CD4-positive, alpha-beta T cell (primary cell): ENCODE measurements at regions of chr17 and their contacts with region 1.

Region 1: DNA sequence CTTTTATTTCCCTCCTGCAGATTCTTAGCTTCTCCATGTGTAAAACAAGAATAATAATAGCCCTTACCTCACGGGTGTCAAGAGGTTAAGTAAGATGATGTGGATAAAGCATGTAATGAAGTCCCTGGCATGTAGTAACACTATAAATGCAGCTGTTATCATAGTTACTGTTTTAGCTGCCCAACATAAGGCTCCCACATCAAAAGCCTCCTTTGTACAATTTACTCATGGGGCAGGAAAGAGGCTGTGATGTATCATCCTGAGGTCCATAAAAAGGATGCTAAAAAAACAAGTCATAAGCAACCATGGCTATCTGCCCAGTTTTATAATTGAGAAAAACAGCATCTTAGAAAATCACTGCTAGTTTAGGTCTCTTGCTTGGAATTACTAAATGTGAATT is 339.7 kb downstream of the CA10 start:
- DNase-seq: no peak
- ATAC-seq: no peak
- H3K4me3 ChIP-seq: no peak overlapping the region
- H3K4me3 Mint-ChIP-seq: no peak overlapping the region
- H3K27ac ChIP-seq: no peak overlapping the region
- H3K27ac Mint-ChIP-seq: no peak overlapping the region
- H3K4me1 ChIP-seq: no peaks in the 10 kb centered on the region
- H3K4me1 Mint-ChIP-seq: no peaks in the 10 kb centered on the region
- H3K27me3 ChIP-seq: peaks cover 0 to 3% of the 10 kb centered on the region in 2 experiments
- H3K27me3 Mint-ChIP-seq: no peaks in the 10 kb centered on the region
- CTCF ChIP-seq: no peak

Region 2: GRCh38 chr17:51751072-51751471 is 67.7 kb before region 1 on chr17:
- CTCF ChIA-PET with region 1: no interaction called
- POLR2A ChIA-PET with region 1: no interaction called
- intact Hi-C with region 1: no loop called
- DNase-seq: no peak
- ATAC-seq: no peak
- H3K4me3 ChIP-seq: no peak overlapping the region
- H3K4me3 Mint-ChIP-seq: no peak overlapping the region
- H3K27ac ChIP-seq: no peak overlapping the region
- H3K27ac Mint-ChIP-seq: no peak overlapping the region
- H3K4me1 ChIP-seq: no peaks in the 10 kb centered on the region
- H3K4me1 Mint-ChIP-seq: no peaks in the 10 kb centered on the region
- H3K27me3 ChIP-seq: no peaks in the 10 kb centered on the region
- H3K27me3 Mint-ChIP-seq: peaks cover 4% of the 10 kb centered on the region
- CTCF ChIP-seq: no peak

Region 3: GRCh38 chr17:51793686-51794085 is 25.1 kb before region 1 on chr17:
- CTCF ChIA-PET with region 1: no interaction called
- POLR2A ChIA-PET with region 1: no interaction called
- intact Hi-C with region 1: no loop called
- DNase-seq: no peak
- ATAC-seq: no peak
- H3K4me3 ChIP-seq: no peak overlapping the region
- H3K4me3 Mint-ChIP-seq: no peak overlapping the region
- H3K27ac ChIP-seq: no peak overlapping the region
- H3K27ac Mint-ChIP-seq: no peak overlapping the region
- H3K4me1 ChIP-seq: no peaks in the 10 kb centered on the region
- H3K4me1 Mint-ChIP-seq: no peaks in the 10 kb centered on the region
- H3K27me3 ChIP-seq: peaks cover 0 to 3% of the 10 kb centered on the region in 2 experiments
- H3K27me3 Mint-ChIP-seq: peaks cover 56% of the 10 kb centered on the region
- CTCF ChIP-seq: no peak

Region 4: GRCh38 chr17:51876986-51877385 is 58.2 kb after region 1 on chr17:
- CTCF ChIA-PET with region 1: no interaction called
- POLR2A ChIA-PET with region 1: no interaction called
- intact Hi-C with region 1: loop called in 1 of 2 experiments (anchors 10 kb)
- DNase-seq: no peak
- ATAC-seq: no peak
- H3K4me3 ChIP-seq: no peak overlapping the region
- H3K4me3 Mint-ChIP-seq: no peak overlapping the region
- H3K27ac ChIP-seq: no peak overlapping the region
- H3K27ac Mint-ChIP-seq: no peak overlapping the region
- H3K4me1 ChIP-seq: no peaks in the 10 kb centered on the region
- H3K4me1 Mint-ChIP-seq: no peaks in the 10 kb centered on the region
- H3K27me3 ChIP-seq: peaks cover 0 to 3% of the 10 kb centered on the region in 2 experiments
- H3K27me3 Mint-ChIP-seq: peaks cover 9% of the 10 kb centered on the region
- CTCF ChIP-seq: no peak